Common myeloid progenitor, CD34-positive (primary cell): ENCODE measurements at regions of chr7 and their contacts with region 1.

Region 1: DNA sequence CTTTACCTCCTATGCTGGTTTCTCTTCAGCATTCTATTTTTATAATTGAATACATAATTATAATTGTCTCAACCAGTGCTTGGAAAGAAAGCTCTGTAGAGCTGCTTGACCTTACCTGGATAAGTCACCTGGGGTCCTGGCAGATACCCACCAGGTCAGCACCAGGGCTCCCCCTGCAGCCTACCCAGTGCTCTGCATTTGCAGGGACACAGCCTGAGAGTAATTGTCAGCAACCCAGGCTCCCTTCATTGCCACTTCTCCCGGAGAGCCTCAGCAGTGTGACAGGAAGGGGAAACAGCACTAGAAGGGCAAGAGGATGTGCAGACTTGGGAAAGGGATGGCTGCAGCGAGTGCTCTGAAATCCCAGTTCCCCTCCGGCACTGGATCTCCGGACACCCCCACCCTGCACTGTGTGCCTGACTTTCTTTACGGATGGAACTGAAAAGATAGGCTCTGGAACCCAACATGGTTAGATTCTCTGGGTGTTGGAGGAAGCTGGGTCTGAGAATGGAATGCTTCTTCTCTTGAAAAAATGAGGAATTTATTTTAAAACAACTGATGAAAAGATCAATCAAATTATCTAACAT is 11.4 kb upstream of the PAX4 start:
- DNase-seq: peak in 2 of 3 donors; percentile 17 to 22
- H3K4me3 ChIP-seq: peak overlapping the region in 1 of 7 experiments; percentile 53
- H3K27ac ChIP-seq: no peak overlapping the region
- H3K4me1 ChIP-seq: peaks cover 0 to 3% (median 0%) of the 10 kb centered on the region in 4 experiments
- H3K27me3 ChIP-seq: peaks cover 0 to 4% (median 2%) of the 10 kb centered on the region in 5 experiments

Region 2: GRCh38 chr7:127588019-127588696 is 41.2 kb before region 1 on chr7 and contains the start of gene ARF5:
- CTCF ChIA-PET with region 1: interaction called, 11 read pairs
- POLR2A ChIA-PET with region 1: no interaction called
- DNase-seq: peak; percentile 81 to 87 (median 87)
- H3K4me3 ChIP-seq: peak within 1 kb of the TSS; percentile 75 to 95 (median 82)
- H3K27ac ChIP-seq: peak within 1 kb of the TSS; percentile 37 to 75
- H3K4me1 ChIP-seq: peaks cover 5 to 42% (median 37%) of the 10 kb centered on the region in 4 experiments
- H3K27me3 ChIP-seq: no peaks in the 10 kb centered on the region